Tibial artery (tissue), 4 donors: ENCODE measurements at regions of chrX and their contacts with region 1.

Region 1: GRCh38 chrX:6151971-6152370 is 76.7 kb downstream of the NLGN4X start:
- DNase-seq: no peak
- H3K4me3 ChIP-seq: no peak overlapping the region
- H3K27ac ChIP-seq: no peak overlapping the region
- H3K4me1 ChIP-seq: no peaks in the 10 kb centered on the region
- H3K27me3 ChIP-seq: no peaks in the 10 kb centered on the region
- CTCF ChIP-seq: no peak

Region 2: GRCh38 chrX:6129195-6129594 is 22.8 kb before region 1 on chrX:
- intact Hi-C with region 1: loop called (anchors 2 kb)
- DNase-seq: no peak
- H3K4me3 ChIP-seq: no peak overlapping the region
- H3K27ac ChIP-seq: no peak overlapping the region
- H3K4me1 ChIP-seq: no peaks in the 10 kb centered on the region
- H3K27me3 ChIP-seq: no peaks in the 10 kb centered on the region
- CTCF ChIP-seq: no peak